ENCODE measurements at regions of chr16 and their contacts with region 1.

Region 1: GRCh38 chr16:59289151-59289550 is 555.0 kb upstream of the GOT2 start:
- DNase-seq: no peak
- ATAC-seq: no peak
- H3K4me3 ChIP-seq: no peak overlapping the region
- H3K27ac ChIP-seq: no peak overlapping the region
- H3K4me1 ChIP-seq: no peaks in the 10 kb centered on the region
- H3K27me3 ChIP-seq: no peaks in the 10 kb centered on the region
- CTCF ChIP-seq: no peak
- POLR2A ChIP-seq: no peak

Region 2: DNA sequence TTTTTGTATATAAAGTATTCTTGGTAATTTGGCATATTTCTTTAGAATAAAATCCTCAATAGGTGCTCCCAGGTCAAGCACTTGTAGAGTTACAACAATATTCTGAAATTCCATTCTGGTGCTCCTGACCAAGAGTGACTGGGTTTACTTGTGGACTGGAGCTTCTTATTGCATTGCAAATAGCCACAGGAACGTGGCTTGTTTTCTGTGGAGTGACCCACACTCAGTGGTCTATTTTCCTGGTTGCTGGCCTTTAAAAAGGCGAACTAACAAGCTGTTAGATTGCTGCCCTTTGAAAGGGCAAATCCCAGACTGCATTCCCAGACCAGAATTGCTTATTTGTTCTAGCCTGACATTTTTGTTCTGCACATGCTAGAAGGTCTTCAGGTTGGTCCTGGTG is 103.8 kb after region 1 on chr16:
- intact Hi-C with region 1: no loop called
- DNase-seq: no peak
- ATAC-seq: no peak
- H3K4me3 ChIP-seq: no peak overlapping the region
- H3K27ac ChIP-seq: no peak overlapping the region
- H3K4me1 ChIP-seq: no peaks in the 10 kb centered on the region
- H3K27me3 ChIP-seq: no peaks in the 10 kb centered on the region
- CTCF ChIP-seq: no peak
- POLR2A ChIP-seq: no peak

Region 3: GRCh38 chr16:59459806-59460205 is 170.7 kb after region 1 on chr16:
- intact Hi-C with region 1: loop called in 1 of 2 experiments (anchors 5 kb)
- DNase-seq: no peak
- ATAC-seq: no peak
- H3K4me3 ChIP-seq: no peak overlapping the region
- H3K27ac ChIP-seq: no peak overlapping the region
- H3K4me1 ChIP-seq: no peaks in the 10 kb centered on the region
- H3K27me3 ChIP-seq: no peaks in the 10 kb centered on the region
- CTCF ChIP-seq: no peak
- POLR2A ChIP-seq: no peak

Region 4: DNA sequence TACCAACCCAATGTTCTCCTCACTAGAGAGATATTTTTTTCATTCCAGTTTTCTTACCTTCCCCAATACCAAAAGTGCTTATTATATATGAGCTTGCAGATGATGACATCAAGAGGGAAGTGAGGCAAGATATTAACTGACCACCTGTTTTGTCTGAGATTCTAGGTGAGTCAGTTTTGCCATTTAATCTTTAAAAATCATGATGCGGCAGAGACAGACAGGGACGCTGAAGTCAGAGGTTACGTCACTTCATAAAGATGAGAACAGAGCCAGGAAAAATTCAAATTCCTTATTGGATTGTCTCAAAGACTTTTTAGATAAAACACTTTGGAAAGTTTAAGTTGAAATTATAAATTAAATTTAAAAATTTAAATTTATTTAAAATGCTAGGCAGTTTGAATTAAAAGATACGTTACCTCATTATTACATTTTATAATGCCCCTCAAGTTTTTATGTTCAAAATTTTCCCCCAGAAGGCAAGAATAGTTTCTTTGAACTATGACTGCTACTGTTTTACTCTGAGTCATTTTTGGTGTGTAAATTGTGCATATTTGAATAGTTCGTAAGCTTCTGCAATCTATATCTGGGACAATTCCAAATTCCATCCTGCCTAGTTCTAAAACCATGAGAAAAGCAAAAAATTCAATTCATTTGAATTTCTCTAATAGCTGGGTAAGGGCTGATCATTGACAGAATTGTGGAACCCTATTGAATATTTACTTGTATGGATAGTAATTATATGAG is 284.5 kb after region 1 on chr16:
- intact Hi-C with region 1: no loop called
- DNase-seq: no peak
- ATAC-seq: no peak
- H3K4me3 ChIP-seq: no peak overlapping the region
- H3K27ac ChIP-seq: no peak overlapping the region
- H3K4me1 ChIP-seq: no peaks in the 10 kb centered on the region
- H3K27me3 ChIP-seq: no peaks in the 10 kb centered on the region
- CTCF ChIP-seq: no peak
- POLR2A ChIP-seq: no peak